ENCODE measurements at regions of chr1 and their contacts with region 1.

Region 1: DNA sequence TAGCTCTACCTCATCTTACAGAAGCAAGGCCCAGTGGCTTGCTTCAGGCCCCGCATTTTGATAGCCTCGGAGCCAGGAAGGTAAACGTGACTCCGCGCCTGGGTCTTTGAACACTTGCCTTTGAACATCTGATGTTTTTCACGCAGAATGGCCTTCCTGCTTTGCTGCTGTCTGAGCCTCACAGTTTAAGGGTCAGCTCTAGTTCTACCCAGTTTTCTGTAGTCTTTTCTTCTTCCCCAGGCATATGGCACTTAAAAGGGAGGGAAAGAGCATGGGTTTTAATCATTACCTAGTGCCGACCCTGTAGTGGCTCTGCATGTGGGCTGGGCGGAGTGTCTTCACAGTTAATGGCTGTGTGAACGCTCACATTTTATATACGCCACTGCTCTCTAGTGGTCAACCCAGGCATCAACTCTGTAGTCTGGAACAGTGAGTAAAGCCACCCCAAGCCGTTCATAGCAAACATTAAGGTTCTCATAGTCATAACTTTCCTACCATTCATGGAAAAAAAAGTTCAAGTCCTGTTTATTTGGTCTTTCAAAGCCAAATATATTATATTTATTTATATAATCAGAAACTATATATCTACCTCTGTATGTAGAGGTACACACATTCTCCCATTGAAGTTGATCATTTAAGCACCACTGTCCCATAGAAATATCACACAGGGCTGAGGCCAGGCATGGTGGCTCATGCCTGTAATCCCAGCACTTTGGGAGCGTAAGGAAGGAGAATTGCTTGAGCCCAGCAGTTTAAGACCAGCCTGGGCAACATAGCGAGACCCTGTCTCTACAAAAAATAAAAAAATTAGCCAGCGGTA is 78.1 kb downstream of the IER5 start:
- DNase-seq: peak; percentile 51 to 75
- ATAC-seq: peak; percentile 99

Region 2: GRCh38 chr1:180515864-180516388 is 650.7 kb before region 1 on chr1:
- intact Hi-C with region 1: loop called in 1 of 2 experiments (anchors 10 kb)
- DNase-seq: peak in 1 of 2 donors; percentile 50
- ATAC-seq: peak; percentile 90

Region 3: GRCh38 chr1:180881806-180882509 is 284.6 kb before region 1 on chr1:
- intact Hi-C with region 1: loop called (anchors 5 to 10 kb)
- DNase-seq: no peak
- ATAC-seq: peak; percentile 51

Region 4: GRCh38 chr1:181551249-181551648 is 384.7 kb after region 1 on chr1:
- intact Hi-C with region 1: no loop called
- DNase-seq: peak; percentile 34 to 43
- ATAC-seq: no peak

Region 5: DNA sequence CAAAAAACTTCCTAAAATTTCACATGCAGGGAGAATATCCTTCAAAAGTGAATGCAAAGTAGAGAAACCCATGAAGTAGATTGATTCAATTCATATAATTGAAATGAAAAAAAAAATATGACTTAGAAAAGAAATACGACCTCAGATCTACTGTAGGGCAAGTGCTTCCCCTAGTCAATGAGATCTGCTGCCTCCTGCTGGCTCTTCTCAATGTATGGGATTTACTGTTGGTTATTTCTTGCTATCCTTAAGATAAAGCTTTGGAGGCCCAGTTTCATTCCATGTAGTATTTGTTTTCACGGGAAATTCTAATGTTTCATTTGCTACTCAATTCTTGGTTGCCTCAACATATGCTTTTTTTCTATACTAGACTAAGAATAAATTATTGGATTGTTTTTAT is 848.8 kb after region 1 on chr1:
- intact Hi-C with region 1: no loop called
- DNase-seq: no peak
- ATAC-seq: no peak

Measured in left colon (tissue), 2 donors.